ENCODE measurements at regions of chr6 and their contacts with region 1.

Region 1: DNA sequence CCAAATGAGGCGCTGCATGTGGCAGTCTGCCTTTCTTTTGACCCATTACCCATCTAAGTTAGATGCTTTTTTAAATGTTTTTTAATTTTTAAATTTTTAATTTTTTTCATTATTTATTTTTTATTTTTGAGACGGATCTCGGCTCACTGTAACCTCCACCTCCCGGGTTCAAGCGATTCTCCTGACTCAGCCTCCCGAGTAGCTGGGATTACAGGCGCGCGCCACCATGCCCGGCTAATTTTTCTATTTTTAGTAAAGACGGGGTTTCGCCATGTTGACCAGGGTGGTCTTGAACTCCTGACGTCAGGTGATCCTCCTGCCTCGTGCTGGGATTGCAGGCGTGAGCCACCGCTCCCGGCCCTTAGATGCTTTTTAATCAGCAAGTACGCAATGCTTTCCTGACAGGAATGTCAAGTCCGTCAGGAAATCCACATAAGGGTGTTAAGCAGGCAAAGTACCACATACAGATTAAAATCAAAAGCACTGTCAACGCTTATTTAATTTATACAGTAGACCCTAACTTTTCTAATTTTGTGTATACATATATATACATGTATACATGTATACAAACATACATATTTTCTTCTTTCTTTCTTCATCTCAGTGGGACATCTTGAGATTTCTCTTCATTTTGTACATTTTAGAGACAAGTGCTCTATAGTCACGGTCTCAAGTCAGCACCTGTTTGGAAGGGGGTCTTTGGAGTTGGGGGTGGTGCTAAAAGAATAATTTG is 995 bp upstream of the GSTA4 start:
- DNase-seq: peak; percentile 48
- H3K4me3 ChIP-seq: peak overlapping the region in 2 of 4 donors; percentile 54 to 80
- H3K27ac ChIP-seq: peak overlapping the region; percentile 89 to 95 (median 92)
- H3K4me1 ChIP-seq: peaks cover 8 to 38% (median 15%) of the 10 kb centered on the region in 4 donors
- H3K27me3 ChIP-seq: no peaks in the 10 kb centered on the region
- CTCF ChIP-seq: no peak
- EP300 ChIP-seq: no peak
- POLR2A ChIP-seq: no peak

Region 2: DNA sequence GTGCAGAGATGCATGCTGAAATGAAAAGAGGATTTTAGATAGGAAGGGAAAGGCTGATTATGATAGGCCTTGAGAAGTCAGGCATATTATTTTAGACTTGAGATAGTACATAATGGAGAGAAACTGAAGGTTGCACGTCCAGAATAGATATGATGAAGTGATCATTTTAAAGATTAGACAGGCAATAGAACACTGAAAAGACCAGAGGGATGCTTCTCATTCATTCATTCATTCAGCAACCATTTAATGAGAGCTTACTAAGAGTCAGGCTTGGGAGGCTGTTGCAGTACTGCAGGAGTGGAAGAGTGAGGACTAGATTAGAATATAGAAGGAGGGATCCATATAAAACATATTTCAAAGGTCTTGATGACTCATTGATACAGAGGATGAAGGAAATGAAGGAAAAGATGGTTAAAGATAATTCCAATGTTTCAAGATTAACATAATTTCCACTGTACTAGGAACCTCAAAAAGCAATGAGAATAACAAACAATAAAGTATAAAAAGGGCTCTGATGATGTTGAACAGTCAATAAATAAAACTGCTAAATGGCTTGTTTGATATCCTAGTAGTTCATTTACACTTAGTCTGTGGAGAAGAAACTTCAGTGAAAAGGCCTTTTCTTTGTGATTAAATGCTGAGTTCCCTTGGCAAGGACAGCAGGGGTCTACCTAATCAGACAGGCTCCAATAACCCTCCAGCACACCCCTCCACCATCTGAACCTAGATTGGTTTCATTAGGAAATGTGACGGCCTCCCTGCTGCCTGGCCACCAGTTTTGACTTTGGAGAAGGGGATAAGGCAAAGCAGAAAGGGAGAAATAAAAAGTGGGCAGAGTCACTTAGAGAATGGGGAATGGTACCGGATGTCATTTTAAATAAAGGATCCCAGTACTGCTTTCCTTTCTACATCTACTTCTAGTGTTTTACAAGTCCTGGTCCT is 63.8 kb after region 1 on chr6:
- in situ Hi-C with region 1: loop called in 2 of 4 experiments (anchors 10 kb)
- intact Hi-C with region 1: no loop called
- DNase-seq: no peak
- H3K4me3 ChIP-seq: peak overlapping the region in 3 of 4 donors; percentile 70 to 96 (median 95)
- H3K27ac ChIP-seq: peak overlapping the region; percentile 94 to 98 (median 96)
- H3K4me1 ChIP-seq: peaks cover 30 to 67% (median 38%) of the 10 kb centered on the region in 4 donors
- H3K27me3 ChIP-seq: no peaks in the 10 kb centered on the region
- CTCF ChIP-seq: no peak
- EP300 ChIP-seq: no peak
- POLR2A ChIP-seq: no peak

Region 3: DNA sequence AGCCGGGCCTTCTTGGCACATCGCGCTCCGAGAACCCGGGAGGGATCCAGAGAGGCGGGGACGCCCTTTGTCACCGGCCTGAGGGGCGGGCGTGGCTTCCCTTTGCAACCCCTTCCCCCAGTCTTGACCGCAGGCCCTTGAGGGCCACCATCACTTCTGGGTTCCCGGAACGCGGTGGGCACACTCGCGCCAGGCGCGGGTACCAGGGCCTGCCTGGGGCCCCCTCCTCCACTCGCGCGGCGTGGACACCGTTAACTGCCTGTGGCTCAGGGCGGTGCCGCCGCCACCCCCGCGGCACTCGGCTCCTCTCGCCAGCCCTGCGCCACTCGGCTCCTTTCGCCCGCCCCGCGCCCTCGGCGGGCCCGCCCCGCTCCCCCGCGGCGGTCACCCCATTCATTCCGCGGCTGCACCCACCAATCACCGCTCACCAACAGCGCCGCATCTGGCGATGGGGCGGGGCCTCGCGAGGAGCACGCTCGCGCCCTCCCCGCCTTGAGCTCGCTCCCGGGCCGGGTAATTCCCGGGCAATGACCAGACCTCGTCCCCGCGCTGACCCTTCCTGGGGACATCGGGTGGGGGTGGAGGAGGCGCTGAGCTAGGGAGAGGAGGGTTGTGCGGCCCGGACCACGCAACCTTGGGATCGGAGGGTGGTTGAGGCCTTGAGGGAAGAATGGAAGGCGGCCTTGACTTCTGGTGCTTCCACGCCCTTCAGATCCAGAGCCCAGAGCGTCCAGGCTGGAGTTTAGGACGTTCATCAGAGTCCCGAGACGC is 363.2 kb after region 1 on chr6:
- in situ Hi-C with region 1: no loop called
- intact Hi-C with region 1: loop called (anchors 10 kb)
- DNase-seq: peak; percentile 94
- H3K4me3 ChIP-seq: peak overlapping the region; percentile 56 to 91 (median 72)
- H3K27ac ChIP-seq: peak overlapping the region; percentile 94 to 96 (median 95)
- H3K4me1 ChIP-seq: peaks cover 7 to 16% (median 10%) of the 10 kb centered on the region in 4 donors
- H3K27me3 ChIP-seq: no peaks in the 10 kb centered on the region
- CTCF ChIP-seq: no peak
- EP300 ChIP-seq: peak; percentile 68
- POLR2A ChIP-seq: peak; percentile 81

Region 4: GRCh38 chr6:53539561-53539960 is 543.5 kb after region 1 on chr6:
- in situ Hi-C with region 1: no loop called
- intact Hi-C with region 1: loop called (anchors 5 kb)
- DNase-seq: no peak
- H3K4me3 ChIP-seq: no peak overlapping the region
- H3K27ac ChIP-seq: no peak overlapping the region
- H3K4me1 ChIP-seq: peaks cover 0 to 55% (median 7%) of the 10 kb centered on the region in 4 donors
- H3K27me3 ChIP-seq: no peaks in the 10 kb centered on the region
- CTCF ChIP-seq: no peak
- EP300 ChIP-seq: no peak
- POLR2A ChIP-seq: no peak